ENCODE measurements at regions of chr10 and their contacts with region 1.

Region 1: DNA sequence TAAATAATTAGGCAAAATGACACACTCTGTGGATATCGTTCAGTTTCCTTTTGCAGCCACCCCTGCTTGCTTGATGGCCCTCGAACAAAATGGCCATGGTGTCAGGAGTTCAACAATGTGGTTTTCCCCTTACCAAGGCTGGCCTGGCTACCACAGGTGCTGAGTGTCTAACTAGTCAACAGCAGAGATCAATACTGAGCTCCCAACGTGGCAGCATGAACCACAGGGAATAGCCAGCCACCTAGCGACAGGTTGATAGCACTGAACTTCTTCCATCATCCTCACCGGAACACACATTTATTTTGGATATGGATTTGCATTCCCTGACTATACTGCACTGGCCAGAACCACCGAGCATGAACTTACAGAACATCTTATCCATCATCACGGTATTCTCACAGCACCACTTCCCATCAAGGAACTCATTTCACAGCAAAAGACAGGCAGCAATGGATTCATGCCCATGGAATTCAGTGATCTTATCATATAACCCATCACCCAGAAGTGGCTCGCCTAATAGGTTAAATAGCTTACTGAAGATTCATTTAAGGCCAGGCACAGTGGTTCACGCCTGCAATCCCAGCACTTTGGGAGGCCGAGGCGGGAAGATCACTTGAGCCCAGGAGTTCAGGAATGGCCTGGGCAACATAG is 6.3 kb downstream of the C10orf67 start:
- DNase-seq: no peak
- H3K4me3 Mint-ChIP-seq: no peak overlapping the region
- H3K27ac Mint-ChIP-seq: peak overlapping the region; percentile 32
- H3K4me1 Mint-ChIP-seq: peaks cover 82% of the 10 kb centered on the region
- H3K27me3 Mint-ChIP-seq: no peaks in the 10 kb centered on the region

Region 2: DNA sequence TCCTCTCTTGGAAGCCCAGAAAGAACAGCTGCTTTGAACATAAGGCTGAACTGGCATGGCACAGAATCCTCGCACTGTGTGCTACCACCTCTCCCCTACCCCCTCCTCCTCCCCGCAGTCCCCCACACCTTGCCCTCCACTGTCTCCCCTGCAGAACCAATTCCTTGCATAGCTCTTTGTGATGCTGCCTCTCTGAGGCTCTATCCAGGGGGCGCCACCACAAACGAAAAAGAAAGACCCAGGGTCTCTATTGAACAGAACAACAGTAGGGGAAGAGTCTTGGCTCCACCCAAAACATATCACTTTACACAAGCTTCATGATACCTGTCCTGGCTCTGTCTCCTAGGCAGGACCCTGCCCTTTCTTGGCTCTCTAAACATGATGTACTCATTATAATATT is 1094.3 kb before region 1 on chr10:
- CTCF ChIA-PET with region 1: no interaction called
- intact Hi-C with region 1: loop called (anchors 10 kb)
- DNase-seq: no peak
- H3K4me3 Mint-ChIP-seq: no peak overlapping the region
- H3K27ac Mint-ChIP-seq: no peak overlapping the region
- H3K4me1 Mint-ChIP-seq: peaks cover 40% of the 10 kb centered on the region
- H3K27me3 Mint-ChIP-seq: no peaks in the 10 kb centered on the region

Region 3: DNA sequence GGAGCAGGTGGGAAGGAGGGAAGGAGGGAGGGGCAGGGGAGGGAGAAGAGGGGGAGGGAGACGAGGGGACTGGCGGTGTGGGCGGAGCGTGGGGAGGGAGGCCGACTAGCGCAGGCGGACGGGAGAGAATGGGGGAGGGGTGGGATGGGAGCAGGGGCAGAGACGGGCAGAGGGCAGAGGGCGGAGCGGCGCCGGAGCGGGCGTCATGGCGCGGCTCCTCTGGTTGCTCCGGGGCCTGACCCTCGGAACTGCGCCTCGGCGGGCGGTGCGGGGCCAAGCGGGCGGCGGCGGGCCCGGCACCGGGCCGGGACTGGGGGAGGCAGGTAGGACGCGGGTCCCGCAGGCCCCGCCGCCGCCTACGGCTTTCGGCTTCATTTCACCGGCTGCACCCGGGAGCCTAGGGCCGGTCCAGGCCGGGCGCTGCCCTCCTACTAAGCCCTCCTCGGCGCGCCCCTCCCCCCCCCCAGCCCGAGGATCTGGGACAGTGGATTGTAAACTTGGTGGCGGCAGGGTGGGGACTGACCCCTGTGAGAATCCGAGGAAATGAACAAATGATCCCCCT is 242.8 kb before region 1 on chr10 and contains the start of gene MSRB2:
- CTCF ChIA-PET with region 1: no interaction called
- intact Hi-C with region 1: loop called (anchors 5 kb)
- DNase-seq: peak; percentile 92
- H3K4me3 Mint-ChIP-seq: peak within 1 kb of the TSS; percentile 97
- H3K27ac Mint-ChIP-seq: peak within 1 kb of the TSS; percentile 90
- H3K4me1 Mint-ChIP-seq: peaks cover 34% of the 10 kb centered on the region
- H3K27me3 Mint-ChIP-seq: no peaks in the 10 kb centered on the region
- total RNA-seq, gene MSRB2: 13.9 to 16.0 TPM

Region 4: GRCh38 chr10:23413629-23414089 is 75.4 kb after region 1 on chr10:
- CTCF ChIA-PET with region 1: no interaction called
- intact Hi-C with region 1: loop called (anchors 2 kb)
- DNase-seq: no peak
- H3K4me3 Mint-ChIP-seq: no peak overlapping the region
- H3K27ac Mint-ChIP-seq: peak overlapping the region; percentile 56
- H3K4me1 Mint-ChIP-seq: peaks cover 28% of the 10 kb centered on the region
- H3K27me3 Mint-ChIP-seq: no peaks in the 10 kb centered on the region

Region 5: GRCh38 chr10:23793577-23793976 is 455.3 kb after region 1 on chr10:
- CTCF ChIA-PET with region 1: no interaction called
- intact Hi-C with region 1: no loop called
- DNase-seq: no peak
- H3K4me3 Mint-ChIP-seq: no peak overlapping the region
- H3K27ac Mint-ChIP-seq: no peak overlapping the region
- H3K4me1 Mint-ChIP-seq: no peaks in the 10 kb centered on the region
- H3K27me3 Mint-ChIP-seq: peaks cover under 1% of the 10 kb centered on the region

Region 6: GRCh38 chr10:24465891-24466818 is 1127.9 kb after region 1 on chr10:
- CTCF ChIA-PET with region 1: no interaction called
- intact Hi-C with region 1: loop called (anchors 10 kb)
- DNase-seq: peak; percentile 76
- H3K4me3 Mint-ChIP-seq: no peak overlapping the region
- H3K27ac Mint-ChIP-seq: peak overlapping the region; percentile 28
- H3K4me1 Mint-ChIP-seq: peaks cover 31% of the 10 kb centered on the region
- H3K27me3 Mint-ChIP-seq: peaks cover 8% of the 10 kb centered on the region

Region 7: GRCh38 chr10:25016376-25017154 is 1678.3 kb after region 1 on chr10 and contains the start of gene THNSL1:
- CTCF ChIA-PET with region 1: no interaction called
- intact Hi-C with region 1: loop called (anchors 1 kb)
- DNase-seq: peak; percentile 97
- H3K4me3 Mint-ChIP-seq: peak within 1 kb of the TSS; percentile 93
- H3K27ac Mint-ChIP-seq: peak within 1 kb of the TSS; percentile 99
- H3K4me1 Mint-ChIP-seq: peaks cover 19% of the 10 kb centered on the region
- H3K27me3 Mint-ChIP-seq: no peaks in the 10 kb centered on the region
- total RNA-seq, gene THNSL1: 6.3 to 7.1 TPM

Measured in activated naive CD4-positive, alpha-beta T cell treated with anti-CD3 and anti-CD28 coated beads for 36 hours (primary cell).